Motor neuron (in vitro differentiated cells): ENCODE measurements at regions of chr13 and their contacts with region 1.

Region 1: GRCh38 chr13:59391696-59392095 is 772.0 kb downstream of the DIAPH3 start:
- ATAC-seq: peak in 7 of 8 experiments; percentile 17 to 85 (median 65)
- H3K4me3 ChIP-seq: no peak overlapping the region
- H3K27ac ChIP-seq: no peak overlapping the region
- H3K4me1 ChIP-seq: no peaks in the 10 kb centered on the region

Region 2: DNA sequence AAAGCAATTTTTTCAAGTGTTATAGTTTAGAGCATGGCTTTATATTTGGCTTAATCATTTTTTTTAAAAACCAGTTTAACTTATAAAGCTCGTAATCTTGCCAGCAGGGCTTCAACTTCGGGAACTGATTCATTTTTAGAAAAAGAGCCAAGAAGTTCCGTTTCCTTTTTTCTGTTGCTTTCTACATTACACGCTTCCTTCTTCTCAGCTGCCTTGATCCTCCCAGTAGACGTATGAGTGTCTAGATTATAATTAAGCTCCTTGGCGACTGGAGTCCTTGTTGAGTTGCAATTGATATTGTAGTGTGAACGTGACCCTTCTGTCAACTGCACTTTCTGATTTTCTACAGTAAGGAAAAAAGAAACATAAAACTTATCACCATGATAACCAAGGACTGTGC is 274.8 kb after region 1 on chr13:
- in situ Hi-C with region 1: loop called in 2 of 9 experiments (anchors 10 to 25 kb)
- ATAC-seq: no peak
- H3K4me3 ChIP-seq: no peak overlapping the region
- H3K27ac ChIP-seq: no peak overlapping the region
- H3K4me1 ChIP-seq: peaks cover 0 to 14% of the 10 kb centered on the region in 2 donors

Region 3: GRCh38 chr13:59677966-59678814 is 286.5 kb after region 1 on chr13:
- in situ Hi-C with region 1: loop called in 3 of 9 experiments (anchors 10 to 25 kb)
- ATAC-seq: peak; percentile 47 to 84 (median 72)
- H3K4me3 ChIP-seq: no peak overlapping the region
- H3K27ac ChIP-seq: no peak overlapping the region
- H3K4me1 ChIP-seq: peaks cover 4 to 5% of the 10 kb centered on the region in 2 donors

Region 4: GRCh38 chr13:59890054-59890453 is 498.4 kb after region 1 on chr13:
- in situ Hi-C with region 1: loop called in 1 of 9 experiments (anchors 25 kb)
- ATAC-seq: peak in 3 of 8 experiments; percentile 33 to 55 (median 38)
- H3K4me3 ChIP-seq: no peak overlapping the region
- H3K27ac ChIP-seq: no peak overlapping the region
- H3K4me1 ChIP-seq: no peaks in the 10 kb centered on the region

Region 5: DNA sequence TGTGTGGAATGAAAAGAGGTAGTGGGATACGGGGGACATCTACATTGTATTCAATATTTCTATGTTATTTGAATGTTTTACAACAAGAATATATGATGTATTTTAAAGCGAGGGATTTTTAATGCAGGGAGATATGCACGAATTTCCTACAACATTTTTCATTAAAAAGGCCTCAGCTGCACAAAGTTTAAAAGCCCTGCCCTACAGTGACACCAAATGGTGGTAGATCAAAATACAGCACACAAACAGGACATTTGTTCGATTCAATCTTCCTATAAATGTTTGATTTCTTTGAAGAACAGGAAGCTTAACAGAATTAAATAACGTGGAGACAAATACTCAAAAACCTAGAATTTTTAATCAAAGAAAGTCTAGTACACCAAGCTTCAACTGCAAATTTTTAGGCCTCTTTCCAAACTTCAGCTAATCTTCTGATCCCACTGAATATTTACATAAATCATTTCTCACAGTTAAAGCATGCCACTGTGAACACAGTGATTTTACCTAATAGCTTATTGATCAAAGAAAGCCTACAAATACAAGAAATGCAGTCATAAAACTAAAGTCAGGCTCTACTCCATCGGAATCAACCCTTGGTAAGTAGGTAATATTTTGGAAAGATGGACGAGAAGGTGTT is 514.8 kb after region 1 on chr13:
- in situ Hi-C with region 1: loop called in 1 of 9 experiments (anchors 25 kb)
- ATAC-seq: peak in 3 of 8 experiments; percentile 46 to 69 (median 61)
- H3K4me3 ChIP-seq: no peak overlapping the region
- H3K27ac ChIP-seq: no peak overlapping the region
- H3K4me1 ChIP-seq: no peaks in the 10 kb centered on the region

Region 6: DNA sequence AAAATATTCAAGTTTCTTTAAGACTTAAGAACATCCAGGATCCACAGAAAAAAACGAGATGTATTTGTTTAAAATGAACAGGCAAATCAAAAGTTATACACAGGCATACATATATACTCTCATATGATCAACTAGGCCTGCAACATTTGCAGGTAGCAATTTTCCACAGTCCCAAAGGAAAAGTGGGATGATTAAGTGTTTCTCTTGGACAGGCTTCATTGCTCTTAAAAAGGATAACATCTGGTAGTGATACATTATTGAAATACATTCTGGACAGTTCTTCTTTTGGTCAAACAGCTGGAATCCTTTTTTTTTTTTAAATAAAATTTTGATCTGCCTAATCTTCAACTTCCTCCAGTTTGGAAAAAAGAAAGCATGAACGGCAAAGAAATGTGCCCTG is 890.5 kb after region 1 on chr13:
- in situ Hi-C with region 1: loop called in 1 of 9 experiments (anchors 25 kb)
- ATAC-seq: no peak
- H3K4me3 ChIP-seq: no peak overlapping the region
- H3K27ac ChIP-seq: no peak overlapping the region
- H3K4me1 ChIP-seq: no peaks in the 10 kb centered on the region